ENCODE measurements at regions of chr1 and their contacts with region 1.

Region 1: GRCh38 chr1:116020668-116021275 is 44.5 kb downstream of the SLC22A15 start:
- DNase-seq: peak in 8 of 9 experiments; percentile 10 to 72 (median 47)
- ATAC-seq: peak; percentile 62
- H3K4me3 ChIP-seq: no peak overlapping the region
- H3K4me3 Mint-ChIP-seq: no peak overlapping the region
- H3K27ac ChIP-seq: no peak overlapping the region
- H3K27ac Mint-ChIP-seq: no peak overlapping the region
- H3K4me1 ChIP-seq: no peaks in the 10 kb centered on the region
- H3K4me1 Mint-ChIP-seq: peaks cover 2% of the 10 kb centered on the region
- H3K27me3 ChIP-seq: no peaks in the 10 kb centered on the region
- H3K27me3 Mint-ChIP-seq: peaks cover 5% of the 10 kb centered on the region
- CTCF ChIP-seq: peak; percentile 63

Region 2: GRCh38 chr1:115807723-115808122 is 213.0 kb before region 1 on chr1:
- CTCF ChIA-PET with region 1: interaction called, 6 read pairs
- POLR2A ChIA-PET with region 1: no interaction called
- intact Hi-C with region 1: loop called (anchors 2 kb)
- DNase-seq: peak in 6 of 9 experiments; percentile 24 to 69 (median 36)
- ATAC-seq: no peak
- H3K4me3 ChIP-seq: no peak overlapping the region
- H3K4me3 Mint-ChIP-seq: no peak overlapping the region
- H3K27ac ChIP-seq: no peak overlapping the region
- H3K27ac Mint-ChIP-seq: no peak overlapping the region
- H3K4me1 ChIP-seq: no peaks in the 10 kb centered on the region
- H3K4me1 Mint-ChIP-seq: peaks cover 2% of the 10 kb centered on the region
- H3K27me3 ChIP-seq: no peaks in the 10 kb centered on the region
- H3K27me3 Mint-ChIP-seq: peaks cover 6% of the 10 kb centered on the region
- CTCF ChIP-seq: peak; percentile 42

Region 3: DNA sequence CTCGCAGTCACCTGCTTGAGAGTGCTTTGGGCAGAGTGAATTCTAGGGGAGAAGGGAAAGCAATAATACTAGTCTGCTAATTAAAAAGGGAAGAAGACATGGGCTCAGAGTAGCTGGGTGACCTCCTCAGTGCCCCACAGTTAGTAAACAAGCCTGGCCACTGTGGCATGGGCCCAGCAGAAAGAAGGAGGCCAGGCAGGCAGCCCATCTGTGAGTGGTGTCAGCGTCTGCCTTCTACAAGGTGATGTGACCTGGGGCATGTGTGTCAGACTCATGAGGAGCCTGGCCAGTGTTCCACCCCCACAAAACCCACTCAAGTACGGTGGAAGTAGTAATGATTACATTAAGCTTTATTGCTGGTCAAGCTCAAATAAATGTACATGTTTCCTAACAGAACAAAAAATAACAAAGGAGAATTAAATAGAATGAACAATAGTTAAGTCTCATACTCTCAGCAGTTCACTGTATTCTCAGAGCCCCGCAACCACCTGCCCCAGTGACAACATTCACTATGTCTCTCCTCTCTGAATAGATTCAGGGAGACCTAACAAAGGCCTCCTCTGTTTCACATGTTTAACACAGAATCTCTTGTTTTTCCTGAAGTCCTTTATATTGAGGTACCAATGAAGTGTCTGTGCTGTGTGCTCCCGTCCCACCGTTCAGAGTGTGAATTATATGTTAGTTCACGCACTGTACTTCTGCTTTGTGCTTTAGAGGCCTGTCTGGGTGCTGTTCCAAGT is 12.0 kb before region 1 on chr1:
- CTCF ChIA-PET with region 1: interaction called, 11 read pairs
- POLR2A ChIA-PET with region 1: interaction called, 3 read pairs
- intact Hi-C with region 1: no loop called
- DNase-seq: no peak
- ATAC-seq: no peak
- H3K4me3 ChIP-seq: no peak overlapping the region
- H3K4me3 Mint-ChIP-seq: no peak overlapping the region
- H3K27ac ChIP-seq: no peak overlapping the region
- H3K27ac Mint-ChIP-seq: no peak overlapping the region
- H3K4me1 ChIP-seq: peaks cover 14% of the 10 kb centered on the region
- H3K4me1 Mint-ChIP-seq: peaks cover 12% of the 10 kb centered on the region
- H3K27me3 ChIP-seq: no peaks in the 10 kb centered on the region
- H3K27me3 Mint-ChIP-seq: peaks cover 3% of the 10 kb centered on the region
- CTCF ChIP-seq: no peak

Region 4: GRCh38 chr1:116067566-116067890 is 46.8 kb after region 1 on chr1:
- CTCF ChIA-PET with region 1: no interaction called
- POLR2A ChIA-PET with region 1: no interaction called
- intact Hi-C with region 1: no loop called
- DNase-seq: no peak
- ATAC-seq: no peak
- H3K4me3 ChIP-seq: no peak overlapping the region
- H3K4me3 Mint-ChIP-seq: no peak overlapping the region
- H3K27ac ChIP-seq: no peak overlapping the region
- H3K27ac Mint-ChIP-seq: no peak overlapping the region
- H3K4me1 ChIP-seq: no peaks in the 10 kb centered on the region
- H3K4me1 Mint-ChIP-seq: no peaks in the 10 kb centered on the region
- H3K27me3 ChIP-seq: no peaks in the 10 kb centered on the region
- H3K27me3 Mint-ChIP-seq: peaks cover 12% of the 10 kb centered on the region
- CTCF ChIP-seq: no peak